Activated B cell treated with CpG ODN at 0.5 μM for 24 hours (primary cell): ENCODE measurements at regions of chr14 and their contacts with region 1.

Region 1: GRCh38 chr14:95185767-95186392 is 28.6 kb upstream of the DICER1 start:
- DNase-seq: no peak
- ATAC-seq: no peak
- H3K4me3 Mint-ChIP-seq: no peak overlapping the region
- H3K27ac Mint-ChIP-seq: no peak overlapping the region
- H3K4me1 Mint-ChIP-seq: peaks cover 5% of the 10 kb centered on the region
- H3K27me3 Mint-ChIP-seq: peaks cover 12% of the 10 kb centered on the region
- CTCF ChIP-seq: no peak

Region 2: GRCh38 chr14:95173518-95173917 is 12.4 kb before region 1 on chr14:
- CTCF ChIA-PET with region 1: no interaction called
- POLR2A ChIA-PET with region 1: interaction called, 4 read pairs
- intact Hi-C with region 1: loop called (anchors 2 kb)
- DNase-seq: no peak
- ATAC-seq: no peak
- H3K4me3 Mint-ChIP-seq: no peak overlapping the region
- H3K27ac Mint-ChIP-seq: no peak overlapping the region
- H3K4me1 Mint-ChIP-seq: no peaks in the 10 kb centered on the region
- H3K27me3 Mint-ChIP-seq: no peaks in the 10 kb centered on the region
- CTCF ChIP-seq: no peak

Region 3: DNA sequence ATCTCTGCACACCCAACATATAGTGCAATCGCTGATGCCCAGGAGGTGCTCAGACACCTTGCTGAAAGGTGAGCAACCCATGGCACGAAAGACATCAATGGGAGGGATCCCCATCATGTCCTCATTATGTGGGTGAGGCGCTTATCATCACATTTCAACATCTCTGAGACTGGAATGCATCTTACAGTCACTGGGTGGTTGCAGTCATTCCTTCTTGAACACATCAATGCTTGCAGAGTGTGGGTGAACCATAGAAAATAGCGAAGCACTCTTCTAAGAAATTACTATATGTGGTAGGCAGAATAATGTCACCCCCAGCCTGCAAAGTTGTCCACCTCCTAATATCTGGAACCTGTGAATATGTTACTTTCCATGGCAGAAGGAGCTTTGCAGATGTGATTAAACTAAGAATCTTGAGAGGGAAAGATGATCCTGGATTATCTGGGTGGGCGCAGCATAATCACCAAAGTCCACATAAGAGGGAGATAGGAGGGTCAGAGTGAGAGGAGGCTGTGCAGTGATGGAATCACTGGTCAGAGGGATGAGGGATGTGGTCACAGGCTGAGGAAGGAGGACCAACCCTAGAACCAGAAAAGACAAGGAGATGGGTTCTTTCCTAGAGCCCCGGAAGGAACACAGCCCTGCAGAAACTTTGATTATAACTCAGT is 400.2 kb after region 1 on chr14:
- CTCF ChIA-PET with region 1: no interaction called
- POLR2A ChIA-PET with region 1: no interaction called
- intact Hi-C with region 1: no loop called
- DNase-seq: no peak
- ATAC-seq: no peak
- H3K4me3 Mint-ChIP-seq: no peak overlapping the region
- H3K27ac Mint-ChIP-seq: no peak overlapping the region
- H3K4me1 Mint-ChIP-seq: no peaks in the 10 kb centered on the region
- H3K27me3 Mint-ChIP-seq: peaks cover 57% of the 10 kb centered on the region
- CTCF ChIP-seq: no peak